Breast epithelium (tissue), 4 donors: ENCODE measurements at regions of chr1 and their contacts with region 1.

Region 1: GRCh38 chr1:213362598-213362997 is 311.6 kb downstream of the RPS6KC1 start:
- DNase-seq: no peak
- H3K4me3 ChIP-seq: no peak overlapping the region
- H3K27ac ChIP-seq: no peak overlapping the region
- H3K4me1 ChIP-seq: no peaks in the 10 kb centered on the region
- H3K27me3 ChIP-seq: no peaks in the 10 kb centered on the region
- CTCF ChIP-seq: no peak
- POLR2A ChIP-seq: no peak

Region 2: GRCh38 chr1:213345621-213346020 is 17.0 kb before region 1 on chr1:
- intact Hi-C with region 1: no loop called
- DNase-seq: no peak
- H3K4me3 ChIP-seq: no peak overlapping the region
- H3K27ac ChIP-seq: no peak overlapping the region
- H3K4me1 ChIP-seq: no peaks in the 10 kb centered on the region
- H3K27me3 ChIP-seq: no peaks in the 10 kb centered on the region
- CTCF ChIP-seq: no peak
- POLR2A ChIP-seq: no peak

Region 3: DNA sequence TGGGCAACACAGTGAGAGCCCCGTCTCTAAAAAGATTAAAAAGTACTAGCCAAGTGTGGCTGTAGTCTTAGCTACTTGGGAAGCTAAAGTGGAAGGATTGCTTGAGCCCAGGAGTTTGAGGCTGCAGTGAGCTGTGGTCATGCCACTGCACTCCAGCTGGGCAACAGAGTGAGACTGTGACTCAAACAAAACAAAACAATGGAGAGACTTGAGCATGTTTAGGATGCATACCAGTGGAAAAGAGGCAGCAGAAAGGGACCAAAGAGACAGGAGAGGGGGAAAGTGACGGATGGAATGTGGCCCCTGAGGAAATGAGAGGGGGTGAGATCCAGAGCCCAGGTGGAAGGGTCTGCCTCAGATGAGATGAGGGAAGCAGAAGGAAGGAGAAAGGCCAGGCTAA is 47.4 kb after region 1 on chr1:
- intact Hi-C with region 1: no loop called
- DNase-seq: no peak
- H3K4me3 ChIP-seq: no peak overlapping the region
- H3K27ac ChIP-seq: peak overlapping the region; percentile 1 to 42
- H3K4me1 ChIP-seq: no peaks in the 10 kb centered on the region
- H3K27me3 ChIP-seq: no peaks in the 10 kb centered on the region
- CTCF ChIP-seq: no peak
- POLR2A ChIP-seq: no peak

Region 4: GRCh38 chr1:214123061-214123784 is 760.6 kb after region 1 on chr1:
- intact Hi-C with region 1: loop called (anchors 5 kb)
- DNase-seq: peak in 1 of 2 donors; percentile 48
- H3K4me3 ChIP-seq: no peak overlapping the region
- H3K27ac ChIP-seq: no peak overlapping the region
- H3K4me1 ChIP-seq: no peaks in the 10 kb centered on the region
- H3K27me3 ChIP-seq: no peaks in the 10 kb centered on the region
- CTCF ChIP-seq: peak in 2 of 3 donors; percentile 45 to 63
- POLR2A ChIP-seq: no peak